ENCODE measurements at regions of chr2 and their contacts with region 1.

Region 1: DNA sequence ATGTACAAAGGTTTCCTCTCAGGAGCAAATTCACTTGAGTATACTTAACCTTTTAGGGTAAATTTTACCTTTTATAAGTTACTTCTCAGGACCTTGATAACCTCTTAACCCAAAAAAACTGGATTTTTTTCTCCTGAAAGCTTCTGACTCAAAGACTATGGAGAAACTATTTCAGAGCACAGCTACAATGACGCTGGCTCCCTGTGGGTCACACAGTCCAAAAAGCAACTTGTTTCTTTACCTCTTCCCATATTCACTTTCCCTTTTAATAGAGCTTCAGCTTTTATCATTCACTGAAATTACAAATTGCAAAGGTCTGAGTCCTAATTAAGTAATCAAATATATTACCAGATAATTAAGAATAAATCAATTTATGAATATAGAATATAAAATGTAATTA is 32.4 kb downstream of the GTF3C3 start:
- DNase-seq: no peak
- ATAC-seq: no peak
- H3K4me3 ChIP-seq: no peak overlapping the region
- H3K4me3 Mint-ChIP-seq: no peak overlapping the region
- H3K27ac ChIP-seq: no peak overlapping the region
- H3K27ac Mint-ChIP-seq: no peak overlapping the region
- H3K4me1 ChIP-seq: no peaks in the 10 kb centered on the region
- H3K4me1 Mint-ChIP-seq: no peaks in the 10 kb centered on the region
- H3K27me3 ChIP-seq: no peaks in the 10 kb centered on the region
- H3K27me3 Mint-ChIP-seq: no peaks in the 10 kb centered on the region

Region 2: GRCh38 chr2:196750982-196751635 is 16.0 kb before region 1 on chr2:
- CTCF ChIA-PET with region 1: interaction called, 3 read pairs
- POLR2A ChIA-PET with region 1: no interaction called
- intact Hi-C with region 1: loop called in 1 of 2 experiments (anchors 1 kb)
- DNase-seq: peak; percentile 17 to 62 (median 51)
- ATAC-seq: peak; percentile 95
- H3K4me3 ChIP-seq: no peak overlapping the region
- H3K4me3 Mint-ChIP-seq: peak overlapping the region in 2 of 10 donors; percentile 7 to 33
- H3K27ac ChIP-seq: no peak overlapping the region
- H3K27ac Mint-ChIP-seq: peak overlapping the region in 4 of 9 donors; percentile 21 to 33 (median 28)
- H3K4me1 ChIP-seq: no peaks in the 10 kb centered on the region
- H3K4me1 Mint-ChIP-seq: peaks cover 9 to 24% (median 16%) of the 10 kb centered on the region in 7 donors
- H3K27me3 ChIP-seq: no peaks in the 10 kb centered on the region
- H3K27me3 Mint-ChIP-seq: no peaks in the 10 kb centered on the region

Region 3: GRCh38 chr2:196836440-196836839 is 69.3 kb after region 1 on chr2:
- CTCF ChIA-PET with region 1: no interaction called
- POLR2A ChIA-PET with region 1: no interaction called
- intact Hi-C with region 1: no loop called
- DNase-seq: no peak
- ATAC-seq: no peak
- H3K4me3 ChIP-seq: no peak overlapping the region
- H3K4me3 Mint-ChIP-seq: no peak overlapping the region
- H3K27ac ChIP-seq: no peak overlapping the region
- H3K27ac Mint-ChIP-seq: no peak overlapping the region
- H3K4me1 ChIP-seq: no peaks in the 10 kb centered on the region
- H3K4me1 Mint-ChIP-seq: no peaks in the 10 kb centered on the region
- H3K27me3 ChIP-seq: no peaks in the 10 kb centered on the region
- H3K27me3 Mint-ChIP-seq: no peaks in the 10 kb centered on the region

Measured in naive thymus-derived CD4-positive, alpha-beta T cell (primary cell).